ENCODE measurements at regions of chr17 and their contacts with region 1.

Region 1: DNA sequence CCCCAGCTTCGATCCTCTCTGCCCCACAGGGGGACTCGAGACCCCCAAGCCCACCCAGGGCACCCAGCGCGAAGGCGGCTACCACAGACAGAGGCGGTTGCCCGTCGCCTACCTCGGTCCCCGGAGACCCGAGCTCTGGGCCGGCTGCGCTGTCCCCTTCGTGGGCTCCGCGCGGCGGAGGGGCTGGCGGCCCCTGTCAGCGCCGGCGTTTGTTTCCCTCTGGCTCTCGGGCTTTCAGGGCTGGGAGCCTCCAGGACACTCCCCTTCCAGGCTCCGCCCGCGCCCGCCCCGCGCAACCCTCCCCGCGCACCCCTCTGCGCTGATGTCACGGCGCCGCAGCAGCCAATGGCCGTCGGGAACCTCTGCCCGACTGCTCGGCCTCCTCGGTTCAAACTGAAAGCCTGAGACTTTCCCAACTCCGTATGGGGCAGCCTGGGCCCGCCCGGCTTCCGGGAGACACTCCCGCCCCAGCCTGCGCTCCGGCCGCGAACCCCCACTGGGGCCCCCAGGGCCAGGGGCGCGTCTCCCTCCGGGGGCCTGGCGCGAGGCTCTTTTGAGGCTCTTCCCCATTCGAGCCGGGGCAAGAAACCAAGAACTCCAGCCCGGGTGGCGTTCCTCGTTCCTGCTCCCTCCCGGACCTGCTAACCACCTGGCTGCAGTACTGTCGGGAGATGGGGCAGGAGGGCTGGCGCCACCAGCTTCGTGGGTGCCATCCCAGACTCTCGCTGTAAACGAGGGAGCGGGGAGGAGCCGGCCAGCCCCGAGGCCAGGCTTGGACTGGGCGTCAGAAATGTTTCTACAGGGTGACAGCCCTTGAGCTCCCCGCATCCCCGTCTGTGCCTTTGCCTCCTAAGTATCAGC is at the start of gene CDC42EP4:
- DNase-seq: peak; percentile 94 to 96
- ATAC-seq: peak; percentile 75 to 88
- H3K4me3 ChIP-seq: peak within 1 kb of the TSS; percentile 77
- H3K27ac ChIP-seq: peak within 1 kb of the TSS; percentile 95 to 96
- H3K4me1 ChIP-seq: peaks cover 32% of the 10 kb centered on the region
- CTCF ChIP-seq: no peak
- EP300 ChIP-seq: peak in 1 of 2 experiments; percentile 28; a peak in 1 of 5 replicates
- POLR2A ChIP-seq: peak; percentile 63
- RAD21 ChIP-seq: peak in 1 of 2 experiments; percentile 39; a peak in 3 of 5 replicates
- polyA plus RNA-seq, gene CDC42EP4: 32.9 and 33.8 TPM in 2 replicates

Region 2: GRCh38 chr17:73126716-73127473 is 185.1 kb before region 1 on chr17:
- CTCF ChIA-PET with region 1: no interaction called
- POLR2A ChIA-PET with region 1: no interaction called
- DNase-seq: peak in 1 of 2 experiments; percentile 20
- ATAC-seq: peak in 1 of 2 experiments; percentile 42; a peak in 1 of 6 replicates
- H3K4me3 ChIP-seq: no peak overlapping the region
- H3K27ac ChIP-seq: peak overlapping the region in 1 of 2 experiments; percentile 3; a peak in 1 of 6 replicates
- H3K4me1 ChIP-seq: peaks cover 6% of the 10 kb centered on the region; the same call in 2 of the 3 replicates
- CTCF ChIP-seq: no peak
- EP300 ChIP-seq: no peak
- POLR2A ChIP-seq: no peak
- RAD21 ChIP-seq: no peak

Region 3: GRCh38 chr17:73210002-73210678 is 101.9 kb before region 1 on chr17:
- CTCF ChIA-PET with region 1: no interaction called
- POLR2A ChIA-PET with region 1: no interaction called
- DNase-seq: peak in 1 of 2 experiments; percentile 75
- ATAC-seq: peak; percentile 38 to 56; a peak in 3 of 6 replicates
- H3K4me3 ChIP-seq: no peak overlapping the region
- H3K27ac ChIP-seq: no peak overlapping the region
- H3K4me1 ChIP-seq: no peaks in the 10 kb centered on the region; the same call in 2 of the 3 replicates
- CTCF ChIP-seq: peak; percentile 24; the same call in 1 of the 3 replicates
- EP300 ChIP-seq: no peak
- POLR2A ChIP-seq: no peak
- RAD21 ChIP-seq: no peak

Region 4: DNA sequence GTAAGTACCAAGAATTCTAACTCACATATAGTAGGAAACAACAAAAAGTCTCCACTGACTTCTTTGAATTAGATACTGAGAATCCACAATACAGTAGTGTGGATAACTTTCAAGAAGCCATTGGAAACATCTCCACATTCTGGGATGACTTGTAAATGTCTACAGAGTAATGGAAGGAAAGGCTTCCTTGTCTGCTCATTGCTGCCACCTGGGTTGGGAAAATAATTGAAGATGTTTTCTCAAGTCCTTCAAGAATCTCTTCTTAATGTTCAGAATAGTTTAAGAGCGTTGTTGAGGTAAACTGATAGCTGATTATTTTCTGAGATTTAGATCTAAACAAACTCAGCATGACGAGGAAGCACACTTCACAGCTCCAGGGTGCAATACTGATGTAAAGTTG is 64.3 kb before region 1 on chr17:
- CTCF ChIA-PET with region 1: interaction called, 77 read pairs
- POLR2A ChIA-PET with region 1: no interaction called
- DNase-seq: peak in 1 of 2 experiments; percentile 32
- ATAC-seq: peak in 1 of 2 experiments; percentile 41; a peak in 1 of 6 replicates
- H3K4me3 ChIP-seq: no peak overlapping the region
- H3K27ac ChIP-seq: no peak overlapping the region
- H3K4me1 ChIP-seq: no peaks in the 10 kb centered on the region
- CTCF ChIP-seq: peak; percentile 47
- EP300 ChIP-seq: no peak
- POLR2A ChIP-seq: no peak
- RAD21 ChIP-seq: peak; percentile 38; a peak in 3 of 5 replicates

Region 5: DNA sequence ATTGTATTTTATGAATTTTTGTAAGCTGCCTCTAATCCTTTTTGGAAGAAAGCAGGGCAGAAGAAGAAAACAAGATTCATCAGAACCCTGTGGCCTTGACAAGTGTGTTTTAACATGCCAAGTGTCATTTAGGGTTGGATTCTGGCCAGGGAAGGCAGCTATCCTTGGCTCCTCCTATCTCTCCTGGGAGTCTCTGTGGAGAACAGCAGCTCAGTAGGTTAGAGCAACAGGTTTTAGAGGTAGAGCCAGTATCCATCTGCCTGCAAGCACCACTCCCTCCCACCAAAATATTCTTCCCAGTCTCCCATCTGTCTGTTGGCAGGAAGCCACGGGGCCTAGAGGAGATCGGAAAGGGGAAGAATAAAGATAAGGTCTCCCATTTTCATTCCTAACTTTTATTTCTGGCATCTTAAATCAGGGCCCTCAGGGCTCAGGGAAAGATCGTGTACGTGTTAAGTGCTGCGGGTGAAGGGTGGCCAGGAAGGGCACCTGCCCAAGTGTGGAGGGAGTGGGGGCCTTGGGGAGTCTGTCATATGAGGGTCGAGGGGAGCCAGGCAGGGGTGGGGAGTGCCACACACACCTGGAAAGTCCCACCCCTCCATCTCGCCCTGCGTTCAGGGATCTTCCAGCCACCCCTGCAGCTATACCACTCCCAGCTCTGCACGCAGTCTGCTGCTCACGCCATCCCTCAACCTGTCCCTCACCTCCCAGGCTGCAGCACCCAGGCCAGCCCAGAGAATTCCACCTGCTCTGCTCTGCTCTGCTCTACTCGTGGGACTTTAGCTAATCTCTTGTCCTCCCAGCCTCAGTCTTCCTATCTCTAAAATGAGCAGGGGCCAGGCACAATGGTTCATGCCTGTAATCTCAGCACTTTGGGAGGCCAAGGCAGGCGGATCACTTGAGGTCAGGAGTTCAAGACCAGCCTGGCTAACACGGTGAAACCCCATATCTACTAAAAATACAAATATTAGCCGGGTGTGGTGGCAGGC is 33.3 kb before region 1 on chr17:
- CTCF ChIA-PET with region 1: interaction called, 11 read pairs
- POLR2A ChIA-PET with region 1: no interaction called
- DNase-seq: no peak
- ATAC-seq: peak in 1 of 2 experiments; percentile 17; a peak in 3 of 6 replicates
- H3K4me3 ChIP-seq: no peak overlapping the region
- H3K27ac ChIP-seq: peak overlapping the region in 1 of 2 experiments; percentile 12; a peak in 1 of 6 replicates
- H3K4me1 ChIP-seq: peaks cover 7% of the 10 kb centered on the region; the same call in 2 of the 3 replicates
- CTCF ChIP-seq: no peak
- EP300 ChIP-seq: no peak
- POLR2A ChIP-seq: no peak
- RAD21 ChIP-seq: no peak

Region 6: GRCh38 chr17:73291260-73291801 is 20.7 kb before region 1 on chr17:
- CTCF ChIA-PET with region 1: interaction called, 71 read pairs
- POLR2A ChIA-PET with region 1: interaction called, 13 read pairs
- DNase-seq: peak; percentile 59 to 65
- ATAC-seq: peak; percentile 47 to 65; a peak in 5 of 6 replicates
- H3K4me3 ChIP-seq: 0 out of 3 replicates have a peak overlapping the region, but pooled peaks have one; percentile 6
- H3K27ac ChIP-seq: peak overlapping the region; percentile 82 to 91
- H3K4me1 ChIP-seq: peaks cover 87% of the 10 kb centered on the region
- CTCF ChIP-seq: no peak
- EP300 ChIP-seq: no peak
- POLR2A ChIP-seq: no peak
- RAD21 ChIP-seq: no peak

Region 7: DNA sequence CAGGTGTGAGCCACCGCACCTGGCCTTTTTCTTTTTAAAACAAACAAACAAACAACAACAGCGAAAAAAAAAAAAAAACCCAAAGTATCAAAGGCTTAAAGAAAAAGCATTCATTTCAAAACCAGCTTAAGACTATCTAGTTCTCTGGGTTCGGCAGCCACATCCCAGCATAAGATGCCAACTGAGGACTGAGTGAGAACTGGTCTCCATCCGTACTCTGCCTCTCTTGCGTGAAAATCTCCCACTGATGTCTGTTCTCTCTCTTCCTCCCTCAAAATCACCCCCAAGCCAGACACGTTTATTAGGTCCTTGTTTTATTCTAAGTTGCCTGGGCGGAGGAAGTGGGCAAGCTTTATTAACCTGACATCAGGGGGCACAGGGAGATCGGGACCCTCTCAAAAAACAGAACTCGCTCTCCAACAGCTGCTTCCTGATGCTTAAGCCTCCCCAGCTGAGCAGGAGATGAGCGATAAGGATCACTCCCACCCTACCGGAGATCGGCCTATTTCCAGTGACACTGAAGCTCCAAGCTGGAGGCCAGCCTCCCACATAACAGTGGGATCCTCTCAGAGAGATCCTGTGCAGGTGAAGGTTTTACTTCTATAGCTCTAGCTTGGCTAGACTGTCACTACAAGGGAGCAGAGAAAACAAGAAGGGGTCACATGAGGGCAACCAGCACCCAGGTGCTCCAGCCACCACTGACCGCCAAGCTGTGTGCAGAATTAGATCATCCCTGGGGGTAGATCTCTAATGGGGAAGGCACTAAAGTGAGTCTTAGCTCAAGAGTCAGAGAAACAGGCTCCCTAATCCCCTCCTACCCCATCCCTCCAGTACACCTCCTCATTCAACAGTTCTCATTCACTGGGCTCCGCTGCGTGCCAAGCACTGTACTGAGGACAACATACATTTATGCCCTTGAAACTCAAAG is 13.8 kb before region 1 on chr17:
- CTCF ChIA-PET with region 1: interaction called, 22 read pairs
- POLR2A ChIA-PET with region 1: interaction called, 22 read pairs
- DNase-seq: no peak
- ATAC-seq: peak; percentile 33 to 34; a peak in 4 of 6 replicates
- H3K4me3 ChIP-seq: no peak overlapping the region
- H3K27ac ChIP-seq: peak overlapping the region in 1 of 2 experiments; percentile 37; a peak in 2 of 6 replicates
- H3K4me1 ChIP-seq: peaks cover 59% of the 10 kb centered on the region
- CTCF ChIP-seq: no peak
- EP300 ChIP-seq: no peak
- POLR2A ChIP-seq: no peak
- RAD21 ChIP-seq: no peak

Region 8: DNA sequence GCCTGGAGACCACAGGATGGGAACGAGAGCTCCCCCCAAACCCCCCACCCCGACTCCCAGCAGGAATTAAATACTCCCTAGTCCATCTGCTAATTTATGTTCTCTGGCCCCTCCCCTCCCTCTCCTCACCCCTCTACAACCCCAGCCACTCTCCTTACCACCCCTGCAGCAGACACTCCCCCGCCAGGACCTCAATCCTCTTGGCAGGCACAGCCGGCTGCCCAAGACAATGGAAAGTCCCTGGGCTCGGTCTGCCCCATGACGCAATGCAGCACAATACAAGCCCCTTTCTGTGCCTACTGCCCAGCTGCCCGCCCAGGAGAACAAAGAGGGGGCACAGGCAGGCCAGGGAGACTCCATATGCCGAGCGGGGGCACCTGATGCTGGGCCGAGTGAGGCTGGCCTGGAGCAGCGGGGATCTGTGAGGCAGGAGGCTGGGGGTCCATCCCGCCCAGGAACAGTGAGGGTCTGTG is 30.1 kb after region 1 on chr17:
- CTCF ChIA-PET with region 1: interaction called, 128 read pairs
- POLR2A ChIA-PET with region 1: interaction called, 28 read pairs
- DNase-seq: peak; percentile 93
- ATAC-seq: peak; percentile 71 to 80
- H3K4me3 ChIP-seq: no peak overlapping the region
- H3K27ac ChIP-seq: peak overlapping the region; percentile 86 to 93
- H3K4me1 ChIP-seq: peaks cover 55% of the 10 kb centered on the region
- CTCF ChIP-seq: no peak
- EP300 ChIP-seq: peak in 1 of 2 experiments; percentile 54; a peak in 1 of 5 replicates
- POLR2A ChIP-seq: no peak
- RAD21 ChIP-seq: no peak

Region 9: DNA sequence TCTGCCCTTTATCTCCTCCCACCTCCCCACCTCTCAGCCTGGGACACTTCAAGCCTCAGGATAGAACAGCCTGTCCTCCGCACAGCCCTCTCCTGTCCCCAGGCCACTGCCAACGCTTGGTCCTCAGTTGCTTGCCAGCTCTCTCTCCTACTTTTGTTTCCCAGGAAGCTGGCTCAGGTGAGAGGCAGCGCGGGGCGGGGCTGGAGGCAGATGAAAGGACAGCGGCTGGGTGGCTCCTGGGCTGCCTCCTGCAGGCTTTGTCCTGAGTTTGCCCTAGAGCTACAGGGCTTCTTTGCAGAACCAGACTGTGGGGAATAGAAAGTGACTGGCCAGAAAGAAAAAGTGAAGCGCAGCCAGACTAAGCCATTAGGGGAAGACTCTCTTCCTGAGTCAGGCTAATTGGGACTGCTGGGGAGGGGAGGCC is 48.0 kb after region 1 on chr17:
- CTCF ChIA-PET with region 1: interaction called, 385 read pairs
- POLR2A ChIA-PET with region 1: interaction called, 4 read pairs
- DNase-seq: no peak
- ATAC-seq: peak; percentile 16 to 18; a peak in 3 of 6 replicates
- H3K4me3 ChIP-seq: no peak overlapping the region
- H3K27ac ChIP-seq: peak overlapping the region in 1 of 2 experiments; percentile 1; a peak in 4 of 6 replicates
- H3K4me1 ChIP-seq: peaks cover 28% of the 10 kb centered on the region
- CTCF ChIP-seq: no peak
- EP300 ChIP-seq: no peak
- POLR2A ChIP-seq: no peak
- RAD21 ChIP-seq: no peak

Region 10: DNA sequence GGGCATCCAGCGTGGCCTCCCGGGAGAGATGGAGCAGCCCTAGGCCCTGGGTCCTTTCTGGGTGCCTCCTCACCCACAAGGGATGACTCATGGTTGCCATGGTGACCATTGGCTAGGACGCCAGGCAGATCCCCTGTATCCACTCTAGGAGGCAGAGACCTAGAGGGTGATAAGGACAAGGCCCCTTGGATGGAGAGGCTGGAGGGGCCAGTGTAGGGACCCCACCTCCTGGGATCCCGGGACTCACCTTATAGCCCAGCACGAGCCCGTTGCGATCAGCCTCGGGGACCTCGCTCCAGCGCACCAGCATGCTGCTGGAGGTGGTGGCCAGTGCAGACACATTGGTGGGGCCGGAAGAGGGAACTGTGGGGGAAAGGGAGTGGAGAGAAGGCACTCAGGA is 82.0 kb after region 1 on chr17:
- CTCF ChIA-PET with region 1: no interaction called
- POLR2A ChIA-PET with region 1: no interaction called
- DNase-seq: peak in 1 of 2 experiments; percentile 29
- ATAC-seq: peak; percentile 19 to 23; a peak in 2 of 6 replicates
- H3K4me3 ChIP-seq: no peak overlapping the region
- H3K27ac ChIP-seq: no peak overlapping the region
- H3K4me1 ChIP-seq: no peaks in the 10 kb centered on the region
- CTCF ChIP-seq: no peak
- EP300 ChIP-seq: no peak
- POLR2A ChIP-seq: no peak
- RAD21 ChIP-seq: no peak

Region 11: GRCh38 chr17:73420895-73421294 is 108.9 kb after region 1 on chr17:
- CTCF ChIA-PET with region 1: no interaction called
- POLR2A ChIA-PET with region 1: no interaction called
- DNase-seq: peak; percentile 65 to 86
- ATAC-seq: peak; percentile 94 to 97
- H3K4me3 ChIP-seq: no peak overlapping the region
- H3K27ac ChIP-seq: no peak overlapping the region
- H3K4me1 ChIP-seq: no peaks in the 10 kb centered on the region
- CTCF ChIP-seq: 0 out of 3 replicates have a peak, but pooled peaks have one; percentile 16
- EP300 ChIP-seq: no peak
- POLR2A ChIP-seq: no peak
- RAD21 ChIP-seq: peak; percentile 23 to 48; a peak in 2 of 5 replicates